ENCODE measurements at regions of chr11 and their contacts with region 1.

Region 1: GRCh38 chr11:103108933-103109817 is at the start of gene DYNC2H1:
- DNase-seq: peak; percentile 80 to 93 (median 88)
- H3K4me3 ChIP-seq: peak within 1 kb of the TSS; percentile 90
- H3K4me3 Mint-ChIP-seq: peak within 1 kb of the TSS; percentile 90 to 97 (median 95)
- H3K27ac ChIP-seq: peak within 1 kb of the TSS; percentile 77
- H3K27ac Mint-ChIP-seq: peak within 1 kb of the TSS; percentile 92 to 99 (median 98)
- H3K4me1 ChIP-seq: no peaks in the 10 kb centered on the region
- H3K4me1 Mint-ChIP-seq: peaks cover 15 to 27% (median 21%) of the 10 kb centered on the region in 3 donors
- H3K27me3 ChIP-seq: peaks cover 4% of the 10 kb centered on the region
- H3K27me3 Mint-ChIP-seq: peaks cover 12% of the 10 kb centered on the region in 2 donors
- total RNA-seq, gene DYNC2H1: 2.4 to 2.9 TPM

Region 2: GRCh38 chr11:103091801-103092524 is 17.2 kb before region 1 on chr11 and contains the start of gene DCUN1D5:
- CTCF ChIA-PET with region 1: interaction called, 19 read pairs
- POLR2A ChIA-PET with region 1: interaction called, 27 read pairs
- DNase-seq: peak; percentile 91 to 96 (median 92)
- H3K4me3 ChIP-seq: peak within 1 kb of the TSS; percentile 69
- H3K4me3 Mint-ChIP-seq: peak within 1 kb of the TSS; percentile 84 to 97 (median 93)
- H3K27ac ChIP-seq: peak within 1 kb of the TSS; percentile 77
- H3K27ac Mint-ChIP-seq: peak within 1 kb of the TSS; percentile 85 to 99 (median 98)
- H3K4me1 ChIP-seq: peaks cover 17% of the 10 kb centered on the region
- H3K4me1 Mint-ChIP-seq: peaks cover 28 to 40% (median 37%) of the 10 kb centered on the region in 3 donors
- H3K27me3 ChIP-seq: peaks cover 6% of the 10 kb centered on the region
- H3K27me3 Mint-ChIP-seq: peaks cover 14 to 38% of the 10 kb centered on the region in 2 donors
- total RNA-seq, gene DCUN1D5: 84.2 to 84.8 TPM

Region 3: DNA sequence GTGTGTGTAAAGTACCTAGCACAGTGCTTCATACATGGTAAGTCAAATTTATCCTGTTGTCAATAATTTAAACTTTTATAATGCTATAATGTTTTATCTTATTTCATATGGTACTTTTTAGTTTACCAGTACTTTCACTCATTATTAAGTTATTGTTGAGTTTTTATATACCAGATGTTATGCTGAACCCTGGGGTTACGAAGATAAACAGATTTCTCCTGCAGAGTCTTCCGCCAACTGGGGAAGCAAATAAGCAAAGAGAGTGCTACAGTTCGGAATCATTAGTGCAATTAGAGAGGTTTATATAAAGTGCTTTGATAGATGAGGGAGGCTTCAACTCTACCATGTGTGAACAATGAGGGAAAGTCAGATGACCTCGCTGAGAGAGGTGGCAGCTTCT is 362.4 kb after region 1 on chr11:
- CTCF ChIA-PET with region 1: no interaction called
- POLR2A ChIA-PET with region 1: no interaction called
- DNase-seq: no peak
- H3K4me3 ChIP-seq: no peak overlapping the region
- H3K4me3 Mint-ChIP-seq: no peak overlapping the region
- H3K27ac ChIP-seq: no peak overlapping the region
- H3K27ac Mint-ChIP-seq: no peak overlapping the region
- H3K4me1 ChIP-seq: no peaks in the 10 kb centered on the region
- H3K4me1 Mint-ChIP-seq: no peaks in the 10 kb centered on the region
- H3K27me3 ChIP-seq: no peaks in the 10 kb centered on the region
- H3K27me3 Mint-ChIP-seq: no peaks in the 10 kb centered on the region